ENCODE measurements at regions of chrX and their contacts with region 1.

Region 1: DNA sequence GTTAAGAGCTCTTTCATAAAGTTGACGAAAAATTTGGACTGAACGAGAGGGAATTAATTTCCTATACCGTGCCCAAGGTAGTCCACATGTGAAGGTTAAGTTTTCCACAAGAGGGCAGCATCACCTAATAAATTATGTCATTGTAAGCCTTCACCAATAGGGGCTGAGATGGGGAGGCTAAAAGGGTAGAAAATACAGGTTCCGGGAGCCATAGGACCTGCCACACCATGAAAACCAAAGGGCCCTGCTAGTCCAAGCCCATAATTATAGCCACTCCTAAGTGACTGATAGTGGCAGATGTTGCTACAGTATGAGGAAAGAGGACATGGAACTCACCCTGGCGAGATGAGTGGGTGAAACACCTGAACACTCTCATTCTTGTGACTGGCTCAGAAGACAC is 122.2 kb downstream of the SHROOM4 start:
- DNase-seq: no peak
- ATAC-seq: peak; percentile 98
- H3K4me3 ChIP-seq: no peak overlapping the region
- H3K27ac ChIP-seq: no peak overlapping the region
- H3K4me1 ChIP-seq: no peaks in the 10 kb centered on the region
- H3K27me3 ChIP-seq: no peaks in the 10 kb centered on the region
- CTCF ChIP-seq: peak; percentile 52 to 65 (median 57); a peak in 5 of 6 replicates
- EP300 ChIP-seq: no peak
- POLR2A ChIP-seq: no peak
- RAD21 ChIP-seq: peak; percentile 71

Region 2: DNA sequence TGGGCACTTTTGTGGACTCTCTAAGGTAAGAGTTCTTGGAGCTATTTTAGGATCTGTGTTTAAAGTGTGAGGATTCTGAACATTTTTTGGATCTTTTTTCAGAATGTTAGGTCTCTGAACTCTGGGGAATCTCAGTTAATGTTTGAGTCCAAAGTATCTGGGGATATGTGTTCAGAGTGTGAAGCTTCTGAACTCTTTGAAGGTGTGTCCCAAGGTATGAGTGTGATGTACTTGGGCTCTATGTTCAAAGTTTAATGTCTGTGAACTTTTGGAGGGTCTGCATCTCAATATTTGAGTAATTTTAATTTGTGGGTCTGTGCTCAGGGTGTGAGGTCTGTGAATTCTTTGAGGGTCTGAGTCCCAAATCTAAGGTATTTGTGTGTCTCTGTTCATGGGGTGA is 898.1 kb before region 1 on chrX:
- CTCF ChIA-PET with region 1: no interaction called
- POLR2A ChIA-PET with region 1: no interaction called
- RAD21 ChIA-PET with region 1: no interaction called
- SMC1A ChIA-PET with region 1: no interaction called
- in situ Hi-C with region 1: no loop called
- intact Hi-C with region 1: no loop called
- DNase-seq: no peak
- ATAC-seq: no peak
- H3K4me3 ChIP-seq: no peak overlapping the region
- H3K27ac ChIP-seq: no peak overlapping the region
- H3K4me1 ChIP-seq: no peaks in the 10 kb centered on the region
- H3K27me3 ChIP-seq: no peaks in the 10 kb centered on the region
- CTCF ChIP-seq: no peak
- EP300 ChIP-seq: no peak
- POLR2A ChIP-seq: no peak
- RAD21 ChIP-seq: no peak

Region 3: GRCh38 chrX:50470103-50471031 is 221.5 kb before region 1 on chrX and contains the start of gene DGKK:
- CTCF ChIA-PET with region 1: no interaction called
- POLR2A ChIA-PET with region 1: no interaction called
- RAD21 ChIA-PET with region 1: no interaction called
- SMC1A ChIA-PET with region 1: no interaction called
- in situ Hi-C with region 1: no loop called
- intact Hi-C with region 1: no loop called
- DNase-seq: no peak
- ATAC-seq: no peak
- H3K4me3 ChIP-seq: no peak within 1 kb of the TSS
- H3K27ac ChIP-seq: no peak within 1 kb of the TSS
- H3K4me1 ChIP-seq: no peaks in the 10 kb centered on the region
- H3K27me3 ChIP-seq: peaks cover 0 to 2% of the 10 kb centered on the region in 2 experiments; a peak in 1 of 4 replicates
- CTCF ChIP-seq: no peak
- EP300 ChIP-seq: no peak
- POLR2A ChIP-seq: no peak
- RAD21 ChIP-seq: no peak
- polyA plus RNA-seq, gene DGKK: not detected

Region 4: GRCh38 chrX:50618788-50619558 is 72.8 kb before region 1 on chrX:
- CTCF ChIA-PET with region 1: no interaction called
- POLR2A ChIA-PET with region 1: no interaction called
- RAD21 ChIA-PET with region 1: no interaction called
- SMC1A ChIA-PET with region 1: no interaction called
- in situ Hi-C with region 1: no loop called
- intact Hi-C with region 1: no loop called
- DNase-seq: no peak
- ATAC-seq: no peak; the same call in 2 of the 3 replicates
- H3K4me3 ChIP-seq: no peak overlapping the region
- H3K27ac ChIP-seq: no peak overlapping the region
- H3K4me1 ChIP-seq: no peaks in the 10 kb centered on the region
- H3K27me3 ChIP-seq: no peaks in the 10 kb centered on the region
- CTCF ChIP-seq: no peak
- EP300 ChIP-seq: no peak
- POLR2A ChIP-seq: no peak
- RAD21 ChIP-seq: no peak

Region 5: DNA sequence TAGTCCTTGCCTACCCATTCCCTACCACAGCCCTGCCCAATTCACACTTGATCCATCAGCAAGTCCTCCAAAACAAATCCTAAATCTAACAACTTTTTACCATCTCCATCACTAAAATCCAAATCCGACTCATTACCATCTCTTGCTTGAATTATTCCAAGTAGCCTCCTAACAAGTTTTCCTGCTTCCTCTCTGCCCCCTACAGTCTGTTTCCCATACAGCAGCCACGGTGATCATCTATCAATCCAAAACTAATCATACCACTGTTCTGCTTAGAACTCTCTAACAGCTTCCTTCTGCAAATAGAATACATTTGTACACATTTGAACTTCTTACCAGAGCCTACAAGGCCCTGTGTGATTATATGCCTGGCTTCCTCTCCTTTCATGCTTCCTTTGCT is 10.8 kb before region 1 on chrX:
- CTCF ChIA-PET with region 1: interaction called, 23 read pairs
- POLR2A ChIA-PET with region 1: no interaction called
- RAD21 ChIA-PET with region 1: no interaction called
- SMC1A ChIA-PET with region 1: interaction called, 4 read pairs
- in situ Hi-C with region 1: no loop called
- intact Hi-C with region 1: no loop called
- DNase-seq: no peak
- ATAC-seq: no peak
- H3K4me3 ChIP-seq: no peak overlapping the region
- H3K27ac ChIP-seq: no peak overlapping the region
- H3K4me1 ChIP-seq: no peaks in the 10 kb centered on the region
- H3K27me3 ChIP-seq: no peaks in the 10 kb centered on the region; a peak in 1 of 4 replicates
- CTCF ChIP-seq: peak in 1 of 3 experiments; percentile 16; a peak in 1 of 6 replicates
- EP300 ChIP-seq: no peak
- POLR2A ChIP-seq: no peak
- RAD21 ChIP-seq: no peak

Region 6: DNA sequence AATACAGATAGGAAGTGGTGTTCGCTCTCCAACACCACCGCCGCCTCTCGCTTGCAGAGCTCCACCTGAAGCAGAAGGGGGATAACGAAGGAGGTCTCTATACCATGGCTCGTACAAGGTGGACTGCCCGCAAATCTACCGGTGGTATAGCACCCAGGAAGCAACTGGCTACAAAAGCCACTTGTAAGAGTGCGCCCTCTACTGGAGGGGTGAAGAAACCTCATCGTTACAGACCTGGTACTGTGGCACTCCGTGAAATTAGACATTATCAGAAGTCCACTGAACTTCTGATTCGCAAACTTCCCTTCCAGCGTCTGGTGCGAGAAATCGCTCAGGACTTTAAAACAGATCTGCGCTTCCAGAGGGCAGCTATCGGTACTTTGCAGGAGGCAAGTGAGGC is 213.5 kb after region 1 on chrX:
- CTCF ChIA-PET with region 1: interaction called, 11 read pairs
- POLR2A ChIA-PET with region 1: no interaction called
- RAD21 ChIA-PET with region 1: no interaction called
- SMC1A ChIA-PET with region 1: no interaction called
- in situ Hi-C with region 1: no loop called
- intact Hi-C with region 1: loop called (anchors 2 kb)
- DNase-seq: no peak
- ATAC-seq: no peak
- H3K4me3 ChIP-seq: no peak overlapping the region
- H3K27ac ChIP-seq: no peak overlapping the region
- H3K4me1 ChIP-seq: no peaks in the 10 kb centered on the region
- H3K27me3 ChIP-seq: no peaks in the 10 kb centered on the region; a peak in 1 of 4 replicates
- CTCF ChIP-seq: peak; percentile 2 to 31 (median 27); a peak in 2 of 6 replicates
- EP300 ChIP-seq: no peak
- POLR2A ChIP-seq: no peak
- RAD21 ChIP-seq: no peak

Region 7: DNA sequence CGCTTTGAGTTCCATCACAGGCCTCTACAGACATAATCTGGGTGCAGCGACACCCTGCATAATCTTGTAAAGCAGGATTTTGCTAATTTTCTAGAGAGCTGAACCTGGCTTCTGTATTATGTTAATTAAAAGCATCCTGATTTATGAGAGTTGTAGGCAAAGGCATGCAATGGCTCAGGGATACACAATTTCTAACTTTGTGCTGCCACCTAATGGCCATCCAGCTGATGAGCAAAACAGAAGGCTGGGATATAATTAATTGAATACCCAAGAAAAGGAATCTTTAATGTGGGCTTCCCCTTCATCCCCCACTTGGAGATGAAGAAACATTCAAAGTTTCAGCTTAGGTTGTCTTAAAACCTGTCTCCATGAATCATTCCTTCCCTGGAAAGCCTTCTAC is 296.8 kb after region 1 on chrX:
- CTCF ChIA-PET with region 1: interaction called, 20 read pairs
- POLR2A ChIA-PET with region 1: no interaction called
- RAD21 ChIA-PET with region 1: no interaction called
- SMC1A ChIA-PET with region 1: interaction called, 4 read pairs
- in situ Hi-C with region 1: no loop called
- intact Hi-C with region 1: loop called (anchors 2 kb)
- DNase-seq: no peak
- ATAC-seq: peak; percentile 77
- H3K4me3 ChIP-seq: no peak overlapping the region
- H3K27ac ChIP-seq: no peak overlapping the region
- H3K4me1 ChIP-seq: no peaks in the 10 kb centered on the region
- H3K27me3 ChIP-seq: no peaks in the 10 kb centered on the region
- CTCF ChIP-seq: peak; percentile 48 to 61 (median 60); a peak in 5 of 6 replicates
- EP300 ChIP-seq: no peak
- POLR2A ChIP-seq: no peak
- RAD21 ChIP-seq: peak; percentile 63

Region 8: DNA sequence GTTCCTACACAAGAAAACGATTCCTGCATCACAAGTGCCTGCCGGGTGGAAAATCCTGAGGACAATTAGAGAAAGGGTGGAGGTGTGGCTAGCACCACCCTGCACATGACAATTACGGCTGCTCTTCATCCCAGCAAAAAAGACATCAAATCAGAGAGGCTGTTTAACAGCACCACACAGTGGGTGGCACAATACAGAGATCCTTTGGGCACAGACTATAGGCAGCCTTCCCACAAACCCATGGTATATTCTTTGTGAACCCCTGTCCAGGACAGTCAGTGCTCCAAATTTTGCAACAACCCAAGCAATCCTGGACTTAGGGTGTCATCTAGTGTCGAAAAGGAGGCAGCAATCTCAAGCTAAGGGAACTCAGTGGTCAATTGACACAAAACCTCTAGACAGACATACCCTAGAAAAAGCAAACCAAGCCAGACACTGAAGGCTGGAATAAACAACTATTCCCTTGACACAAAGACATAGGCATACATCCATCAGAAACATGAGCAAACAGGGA is 356.1 kb after region 1 on chrX:
- CTCF ChIA-PET with region 1: interaction called, 5 read pairs
- POLR2A ChIA-PET with region 1: no interaction called
- RAD21 ChIA-PET with region 1: no interaction called
- SMC1A ChIA-PET with region 1: no interaction called
- in situ Hi-C with region 1: no loop called
- intact Hi-C with region 1: loop called (anchors 1 kb)
- DNase-seq: no peak
- ATAC-seq: no peak
- H3K4me3 ChIP-seq: no peak overlapping the region
- H3K27ac ChIP-seq: no peak overlapping the region
- H3K4me1 ChIP-seq: no peaks in the 10 kb centered on the region
- H3K27me3 ChIP-seq: no peaks in the 10 kb centered on the region
- CTCF ChIP-seq: peak in 2 of 3 experiments; percentile 6 to 31; a peak in 1 of 6 replicates
- EP300 ChIP-seq: no peak
- POLR2A ChIP-seq: no peak
- RAD21 ChIP-seq: peak; percentile 45

Region 9: GRCh38 chrX:51435101-51435500 is 743.3 kb after region 1 on chrX:
- CTCF ChIA-PET with region 1: no interaction called
- POLR2A ChIA-PET with region 1: no interaction called
- RAD21 ChIA-PET with region 1: no interaction called
- SMC1A ChIA-PET with region 1: no interaction called
- in situ Hi-C with region 1: loop called (anchors 25 kb)
- intact Hi-C with region 1: no loop called
- DNase-seq: no peak
- ATAC-seq: no peak
- H3K4me3 ChIP-seq: no peak overlapping the region
- H3K27ac ChIP-seq: no peak overlapping the region
- H3K4me1 ChIP-seq: no peaks in the 10 kb centered on the region
- H3K27me3 ChIP-seq: no peaks in the 10 kb centered on the region
- CTCF ChIP-seq: no peak
- EP300 ChIP-seq: no peak
- POLR2A ChIP-seq: no peak
- RAD21 ChIP-seq: no peak

Region 10: DNA sequence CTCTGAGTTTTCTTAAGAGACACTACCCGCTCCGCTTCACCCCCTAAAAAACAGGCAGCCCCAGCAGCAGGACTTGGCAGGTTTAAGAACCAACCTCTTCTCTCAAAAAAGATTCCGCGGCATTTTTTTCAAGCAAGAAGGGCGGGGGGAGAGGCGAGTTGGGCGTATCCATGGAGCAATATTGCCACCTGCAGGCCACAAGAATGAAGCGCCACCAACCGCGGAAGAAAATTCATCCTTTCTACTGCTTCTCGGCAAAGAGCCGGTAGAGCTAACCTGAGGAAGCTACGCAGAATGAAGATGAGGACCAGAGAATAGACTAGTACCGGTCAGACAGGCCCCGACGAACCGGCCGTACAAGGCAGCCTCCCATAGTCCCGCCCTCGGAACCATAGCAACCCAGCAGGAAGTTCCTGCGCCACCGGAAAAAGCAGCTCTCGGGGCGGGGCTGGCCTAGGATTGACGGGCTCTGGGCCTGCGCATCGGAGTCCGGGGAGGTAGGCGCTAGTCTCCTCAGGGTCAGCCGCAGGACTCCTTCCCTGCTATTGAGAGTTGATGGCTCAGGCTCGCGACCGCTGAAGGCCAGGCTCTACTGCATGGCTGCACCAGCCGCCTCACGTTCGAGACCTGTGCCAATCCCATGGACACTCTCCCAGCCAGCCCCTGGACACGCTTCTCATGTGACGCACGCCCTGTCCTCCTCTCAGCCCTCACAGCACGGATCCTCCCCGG is 1569.8 kb after region 1 on chrX:
- CTCF ChIA-PET with region 1: no interaction called
- POLR2A ChIA-PET with region 1: no interaction called
- RAD21 ChIA-PET with region 1: no interaction called
- SMC1A ChIA-PET with region 1: no interaction called
- in situ Hi-C with region 1: no loop called
- intact Hi-C with region 1: loop called (anchors 5 kb)
- DNase-seq: peak; percentile 64
- ATAC-seq: peak; percentile 100
- H3K4me3 ChIP-seq: peak overlapping the region; percentile 68
- H3K27ac ChIP-seq: peak overlapping the region; percentile 79
- H3K4me1 ChIP-seq: no peaks in the 10 kb centered on the region; the same call in none of the 2 replicates
- H3K27me3 ChIP-seq: no peaks in the 10 kb centered on the region
- CTCF ChIP-seq: peak; percentile 80 to 96 (median 93); a peak in 5 of 6 replicates
- EP300 ChIP-seq: peak in 1 of 2 experiments; percentile 32; a peak in 1 of 4 replicates
- POLR2A ChIP-seq: peak; percentile 84
- RAD21 ChIP-seq: peak; percentile 97

Measured in GM12878 (cell line).